CD4-positive, alpha-beta T cell (primary cell): ENCODE measurements at regions of chr17 and their contacts with region 1.

Region 1: DNA sequence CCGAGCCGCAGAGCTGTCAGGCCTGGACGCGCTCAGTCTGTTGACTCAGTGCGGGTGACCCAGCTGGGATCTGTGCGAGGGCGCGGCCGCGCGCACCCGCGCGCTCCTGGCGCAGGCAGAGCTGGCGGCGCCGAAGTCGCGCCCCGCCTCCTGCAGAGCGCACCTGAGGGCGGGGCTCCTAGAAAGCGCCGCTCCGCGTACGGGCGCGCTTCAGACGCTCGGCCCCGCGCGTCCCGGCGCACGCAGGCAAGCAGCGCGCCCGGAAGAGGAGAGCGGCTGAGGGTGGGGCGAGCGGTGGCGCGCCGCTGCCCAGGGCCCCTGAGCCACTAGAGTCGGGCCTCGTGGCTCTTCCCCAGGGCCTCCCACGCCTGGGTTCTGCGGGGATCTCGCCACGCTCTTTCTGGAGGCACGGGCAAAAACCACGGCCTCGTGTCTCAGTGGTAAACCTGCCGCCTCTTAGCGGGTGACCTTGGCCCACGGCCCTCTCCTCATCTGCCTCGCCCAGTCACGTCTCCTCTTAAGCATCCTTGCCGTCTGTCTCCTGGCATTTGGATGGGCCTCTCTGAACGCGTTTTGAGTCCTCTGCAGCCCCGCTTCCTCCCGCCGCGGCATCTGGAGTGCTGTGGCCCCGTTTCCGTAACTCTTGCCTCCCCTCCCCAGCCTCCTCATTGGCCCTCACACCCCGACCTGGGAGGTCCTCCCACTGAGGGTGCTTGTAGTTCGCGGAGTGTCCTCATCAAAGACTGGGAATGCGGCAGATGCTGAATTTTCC is at the start of gene ABCA5:
- DNase-seq: peak; percentile 73 to 98 (median 84)
- ATAC-seq: peak; percentile 91
- H3K4me3 ChIP-seq: peak within 1 kb of the TSS; percentile 77
- H3K4me3 Mint-ChIP-seq: peak within 1 kb of the TSS; percentile 100
- H3K27ac ChIP-seq: peak within 1 kb of the TSS; percentile 54 to 78
- H3K27ac Mint-ChIP-seq: peak within 1 kb of the TSS; percentile 97
- H3K4me1 ChIP-seq: peaks cover 19% of the 10 kb centered on the region
- H3K4me1 Mint-ChIP-seq: peaks cover 39% of the 10 kb centered on the region
- H3K27me3 ChIP-seq: peaks cover 0 to 3% of the 10 kb centered on the region in 2 experiments
- H3K27me3 Mint-ChIP-seq: peaks cover 6% of the 10 kb centered on the region
- CTCF ChIP-seq: no peak
- total RNA-seq, gene ABCA5: 33.4 to 34.9 TPM

Region 2: GRCh38 chr17:67993596-67994361 is 1333.5 kb before region 1 on chr17:
- CTCF ChIA-PET with region 1: no interaction called
- POLR2A ChIA-PET with region 1: no interaction called
- intact Hi-C with region 1: loop called in 1 of 2 experiments (anchors 5 kb)
- DNase-seq: peak in 10 of 14 experiments; percentile 2 to 89 (median 60)
- ATAC-seq: peak; percentile 53
- H3K4me3 ChIP-seq: peak overlapping the region; percentile 69
- H3K4me3 Mint-ChIP-seq: peak overlapping the region; percentile 86
- H3K27ac ChIP-seq: no peak overlapping the region
- H3K27ac Mint-ChIP-seq: peak overlapping the region; percentile 75
- H3K4me1 ChIP-seq: peaks cover 39% of the 10 kb centered on the region
- H3K4me1 Mint-ChIP-seq: peaks cover 32% of the 10 kb centered on the region
- H3K27me3 ChIP-seq: peaks cover 6 to 14% of the 10 kb centered on the region in 2 experiments
- H3K27me3 Mint-ChIP-seq: peaks cover 19% of the 10 kb centered on the region
- CTCF ChIP-seq: no peak

Region 3: GRCh38 chr17:69223809-69224208 is 103.4 kb before region 1 on chr17:
- CTCF ChIA-PET with region 1: no interaction called
- POLR2A ChIA-PET with region 1: no interaction called
- intact Hi-C with region 1: no loop called
- DNase-seq: no peak
- ATAC-seq: no peak
- H3K4me3 ChIP-seq: no peak overlapping the region
- H3K4me3 Mint-ChIP-seq: no peak overlapping the region
- H3K27ac ChIP-seq: no peak overlapping the region
- H3K27ac Mint-ChIP-seq: no peak overlapping the region
- H3K4me1 ChIP-seq: no peaks in the 10 kb centered on the region
- H3K4me1 Mint-ChIP-seq: peaks cover 8% of the 10 kb centered on the region
- H3K27me3 ChIP-seq: no peaks in the 10 kb centered on the region
- H3K27me3 Mint-ChIP-seq: no peaks in the 10 kb centered on the region
- CTCF ChIP-seq: no peak

Region 4: DNA sequence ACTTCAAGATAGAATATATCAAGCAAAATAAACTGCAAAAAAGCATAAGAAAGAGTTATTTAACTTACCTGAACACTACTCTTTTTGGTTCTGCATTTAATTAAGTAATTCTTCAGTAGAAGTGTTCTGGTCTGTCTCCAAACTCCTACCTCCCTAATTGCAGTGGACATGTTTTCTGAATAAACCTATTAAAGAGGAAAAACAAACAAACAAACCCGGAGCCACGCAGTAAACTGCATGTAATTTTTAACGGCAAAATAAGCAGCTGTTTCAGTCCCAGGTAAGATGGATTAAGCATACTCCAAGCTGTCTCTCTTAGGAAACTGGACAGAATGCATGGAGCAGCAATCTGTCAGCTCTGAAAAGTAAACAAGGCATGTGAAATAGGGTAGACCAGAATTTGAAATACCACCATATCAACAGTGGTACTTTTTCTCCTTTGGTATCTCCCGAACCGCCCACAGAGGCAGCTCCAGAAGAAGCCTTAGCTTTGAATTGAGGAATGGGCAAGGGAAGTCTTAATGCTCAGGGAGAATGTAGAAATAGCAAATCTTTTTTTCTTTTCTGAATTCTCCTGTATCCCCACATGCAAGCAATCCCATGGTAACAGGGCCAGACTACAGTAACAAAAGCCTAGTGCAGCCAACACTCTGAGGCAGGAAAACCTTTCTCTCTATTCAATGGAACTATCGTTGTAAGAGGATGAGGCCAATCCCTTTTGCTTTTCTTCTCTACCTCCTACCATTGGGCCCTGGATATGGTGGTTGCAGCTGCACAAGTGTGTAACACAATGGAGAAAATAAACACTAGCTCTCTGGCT is 12.8 kb before region 1 on chr17:
- CTCF ChIA-PET with region 1: no interaction called
- POLR2A ChIA-PET with region 1: interaction called, 15 read pairs
- intact Hi-C with region 1: no loop called
- DNase-seq: no peak
- ATAC-seq: no peak
- H3K4me3 ChIP-seq: no peak overlapping the region
- H3K4me3 Mint-ChIP-seq: no peak overlapping the region
- H3K27ac ChIP-seq: no peak overlapping the region
- H3K27ac Mint-ChIP-seq: no peak overlapping the region
- H3K4me1 ChIP-seq: no peaks in the 10 kb centered on the region
- H3K4me1 Mint-ChIP-seq: peaks cover 24% of the 10 kb centered on the region
- H3K27me3 ChIP-seq: no peaks in the 10 kb centered on the region
- H3K27me3 Mint-ChIP-seq: no peaks in the 10 kb centered on the region
- CTCF ChIP-seq: no peak

Region 5: GRCh38 chr17:69414408-69415274 is 87.4 kb after region 1 on chr17 and contains the start of gene MAP2K6:
- CTCF ChIA-PET with region 1: no interaction called
- POLR2A ChIA-PET with region 1: interaction called, 38 read pairs
- intact Hi-C with region 1: loop called (anchors 1 kb)
- DNase-seq: peak; percentile 67 to 89 (median 79)
- ATAC-seq: peak; percentile 94
- H3K4me3 ChIP-seq: peak within 1 kb of the TSS; percentile 79
- H3K4me3 Mint-ChIP-seq: no peak within 1 kb of the TSS
- H3K27ac ChIP-seq: peak within 1 kb of the TSS in 1 of 2 donors; percentile 51
- H3K27ac Mint-ChIP-seq: no peak within 1 kb of the TSS
- H3K4me1 ChIP-seq: peaks cover 16% of the 10 kb centered on the region
- H3K4me1 Mint-ChIP-seq: no peaks in the 10 kb centered on the region
- H3K27me3 ChIP-seq: no peaks in the 10 kb centered on the region
- H3K27me3 Mint-ChIP-seq: no peaks in the 10 kb centered on the region
- CTCF ChIP-seq: no peak
- total RNA-seq, gene MAP2K6: 14.0 to 14.6 TPM

Region 6: GRCh38 chr17:69523244-69523861 is 196.1 kb after region 1 on chr17:
- CTCF ChIA-PET with region 1: no interaction called
- POLR2A ChIA-PET with region 1: interaction called, 4 read pairs
- intact Hi-C with region 1: loop called in 1 of 2 experiments (anchors 5 kb)
- DNase-seq: peak in 3 of 14 experiments; percentile 25 to 30 (median 29)
- ATAC-seq: no peak
- H3K4me3 ChIP-seq: no peak overlapping the region
- H3K4me3 Mint-ChIP-seq: no peak overlapping the region
- H3K27ac ChIP-seq: no peak overlapping the region
- H3K27ac Mint-ChIP-seq: no peak overlapping the region
- H3K4me1 ChIP-seq: no peaks in the 10 kb centered on the region
- H3K4me1 Mint-ChIP-seq: peaks cover 4% of the 10 kb centered on the region
- H3K27me3 ChIP-seq: no peaks in the 10 kb centered on the region
- H3K27me3 Mint-ChIP-seq: no peaks in the 10 kb centered on the region
- CTCF ChIP-seq: no peak

Region 7: DNA sequence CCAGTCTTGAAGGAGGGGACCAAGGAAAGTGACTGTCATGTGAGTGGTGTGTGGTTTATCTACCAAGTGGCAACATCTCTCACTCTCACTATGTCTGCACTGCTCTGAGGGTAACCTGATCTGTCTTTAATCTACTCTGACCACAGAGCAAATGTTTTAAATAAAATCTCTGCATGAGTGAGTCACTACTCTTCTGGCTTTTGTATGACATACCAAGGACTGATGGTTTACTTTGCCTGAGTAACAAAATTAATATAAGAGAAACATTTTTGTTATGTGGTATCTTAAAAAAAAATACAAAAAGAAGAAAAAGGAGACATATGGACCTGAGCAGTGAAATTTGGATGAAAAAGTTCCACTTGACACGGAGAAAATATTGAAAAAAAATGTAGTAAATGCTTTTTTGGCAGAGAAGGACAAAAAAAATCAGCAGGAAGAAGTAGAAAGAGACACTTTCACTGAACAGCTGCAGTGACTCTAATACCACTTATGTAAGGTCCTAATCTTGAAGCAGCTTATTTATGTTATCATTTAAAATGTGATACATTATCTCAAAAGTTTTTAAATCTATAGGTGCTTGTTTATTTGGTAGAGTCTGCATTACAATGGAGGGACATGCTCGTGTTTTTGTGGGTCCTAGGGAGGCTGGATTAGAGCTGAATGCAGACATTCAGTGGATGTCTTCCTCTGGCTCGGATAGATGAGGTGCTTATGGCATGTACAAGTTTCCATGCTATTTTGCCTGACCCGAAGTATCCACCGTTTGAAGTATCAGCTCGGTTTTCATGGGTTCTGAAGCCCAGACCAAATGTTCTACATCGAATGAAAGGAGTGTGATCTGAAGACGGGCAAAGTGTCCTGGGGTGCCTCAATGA is 328.0 kb after region 1 on chr17:
- CTCF ChIA-PET with region 1: no interaction called
- POLR2A ChIA-PET with region 1: no interaction called
- intact Hi-C with region 1: no loop called
- DNase-seq: no peak
- ATAC-seq: no peak
- H3K4me3 ChIP-seq: no peak overlapping the region
- H3K4me3 Mint-ChIP-seq: no peak overlapping the region
- H3K27ac ChIP-seq: no peak overlapping the region
- H3K27ac Mint-ChIP-seq: no peak overlapping the region
- H3K4me1 ChIP-seq: no peaks in the 10 kb centered on the region
- H3K4me1 Mint-ChIP-seq: no peaks in the 10 kb centered on the region
- H3K27me3 ChIP-seq: no peaks in the 10 kb centered on the region
- H3K27me3 Mint-ChIP-seq: no peaks in the 10 kb centered on the region
- CTCF ChIP-seq: no peak